ENCODE measurements at regions of chr2 and their contacts with region 1.

Region 1: DNA sequence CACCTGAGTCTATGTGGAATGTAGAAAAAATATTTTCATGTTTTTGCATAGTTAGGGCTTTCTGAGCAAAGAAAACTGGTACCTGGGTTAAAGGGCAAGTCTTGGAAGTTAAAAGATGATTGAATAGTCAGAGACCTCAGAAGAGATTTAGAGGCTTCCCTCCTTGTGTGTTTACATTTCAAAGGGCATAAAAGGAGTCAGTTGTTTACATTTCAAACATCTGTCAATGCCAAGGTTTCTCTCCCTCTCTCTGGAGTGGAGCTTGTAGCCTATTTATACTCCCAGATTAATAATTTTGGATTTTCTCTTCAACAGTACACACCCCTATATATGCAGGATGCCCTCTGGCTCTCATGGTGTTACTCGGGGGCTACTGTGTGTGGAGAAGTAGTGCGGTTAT is 8.6 kb downstream of the M1AP start:
- DNase-seq: no peak
- ATAC-seq: no peak
- H3K4me3 ChIP-seq: no peak overlapping the region
- H3K27ac ChIP-seq: no peak overlapping the region
- H3K4me1 ChIP-seq: no peaks in the 10 kb centered on the region
- H3K27me3 ChIP-seq: peaks cover 13% of the 10 kb centered on the region
- CTCF ChIP-seq: no peak
- POLR2A ChIP-seq: no peak
- RAD21 ChIP-seq: no peak

Region 2: DNA sequence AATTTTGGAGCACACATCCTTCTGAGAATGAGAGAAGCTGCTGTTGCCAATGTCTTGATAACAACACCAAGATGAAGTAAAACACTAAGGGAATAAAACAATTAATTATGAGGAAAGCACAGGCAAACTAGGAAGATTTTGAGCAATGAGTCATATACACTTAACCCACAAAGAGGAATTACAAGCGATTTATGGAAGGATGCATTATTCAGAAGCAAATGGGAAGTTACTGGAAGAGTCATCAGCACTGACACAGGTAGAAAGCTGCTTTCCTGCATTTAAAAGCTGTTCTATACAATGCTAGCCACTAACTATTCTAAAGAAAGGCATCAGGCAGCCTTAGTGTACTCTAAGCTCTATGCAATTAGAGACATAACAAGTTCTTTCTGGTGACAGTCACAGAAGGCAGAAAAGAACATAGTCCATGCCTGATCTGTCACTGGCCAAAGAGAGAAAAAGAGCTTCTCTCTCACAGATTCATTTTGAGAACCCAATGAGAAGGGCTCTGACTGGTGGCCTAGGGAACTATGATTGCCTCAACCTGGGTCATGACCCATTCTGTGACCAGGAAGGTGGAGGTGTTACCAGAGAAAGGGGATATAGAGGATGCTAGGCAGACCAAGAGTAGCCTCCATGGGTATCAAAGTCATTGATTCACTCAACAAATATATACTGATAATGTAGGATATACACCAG is 36.8 kb before region 1 on chr2:
- CTCF ChIA-PET with region 1: no interaction called
- POLR2A ChIA-PET with region 1: no interaction called
- dilution Hi-C with region 1: no loop called
- in situ Hi-C with region 1: no loop called
- intact Hi-C with region 1: loop called (anchors 5 kb)
- DNase-seq: peak; percentile 55
- ATAC-seq: peak; percentile 56; the same call in 1 of the 2 replicates
- H3K4me3 ChIP-seq: no peak overlapping the region
- H3K27ac ChIP-seq: no peak overlapping the region
- H3K4me1 ChIP-seq: no peaks in the 10 kb centered on the region
- H3K27me3 ChIP-seq: peaks cover 21% of the 10 kb centered on the region
- CTCF ChIP-seq: no peak
- POLR2A ChIP-seq: no peak
- RAD21 ChIP-seq: no peak

Measured in IMR-90 (cell line).